HCT116 (cell line): ENCODE measurements at regions of chr9 and their contacts with region 1.

Region 1: GRCh38 chr9:35657546-35658136 is at the start of gene RMRP:
- DNase-seq: peak; percentile 99
- ATAC-seq: peak; percentile 89
- H3K4me3 ChIP-seq: peak within 1 kb of the TSS; percentile 68 to 75
- H3K27ac ChIP-seq: peak within 1 kb of the TSS; percentile 85
- H3K4me1 ChIP-seq: peaks cover 10 to 34% of the 10 kb centered on the region in 2 experiments; a peak in 3 of 4 replicates
- H3K27me3 ChIP-seq: no peaks in the 10 kb centered on the region
- CTCF ChIP-seq: no peak
- POLR2A ChIP-seq: no peak
- RAD21 ChIP-seq: no peak
- total RNA-seq, gene RMRP: 30,969 TPM

Region 2: DNA sequence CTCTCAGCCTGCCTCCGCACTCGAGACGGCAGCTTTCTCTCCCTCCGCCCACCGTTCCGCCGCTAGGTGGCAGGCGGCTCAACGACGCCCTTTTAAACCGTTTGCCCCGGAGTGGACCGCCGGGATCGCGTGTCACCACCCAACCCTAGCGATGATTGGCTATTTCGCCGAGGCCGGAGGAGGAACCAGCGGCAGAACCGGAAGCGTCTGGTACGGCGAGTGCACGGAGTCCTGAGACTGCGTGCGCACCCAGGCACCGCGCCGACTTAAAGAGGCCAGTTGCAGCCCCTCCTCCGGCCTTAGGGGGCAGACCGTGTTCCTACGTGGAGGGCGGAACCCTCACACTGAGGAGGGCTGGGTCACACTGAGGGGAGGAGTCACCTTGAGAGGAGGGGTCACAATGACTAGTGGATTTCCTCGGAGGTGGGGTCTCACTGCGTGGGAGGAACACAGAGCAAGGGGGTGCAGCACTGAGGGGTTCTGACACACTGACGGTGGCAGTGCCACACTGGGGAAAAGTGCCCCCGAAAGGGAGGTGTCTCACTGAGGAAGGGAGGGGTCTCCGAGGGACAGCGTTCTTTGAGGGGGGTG is 53.6 kb before region 1 on chr9:
- CTCF ChIA-PET with region 1: interaction called, 7 read pairs
- POLR2A ChIA-PET with region 1: interaction called, 4 read pairs
- RAD21 ChIA-PET with region 1: no interaction called
- intact Hi-C with region 1: loop called (anchors 2 kb)
- DNase-seq: peak; percentile 99
- ATAC-seq: peak; percentile 89
- H3K4me3 ChIP-seq: peak overlapping the region; percentile 76 to 85
- H3K27ac ChIP-seq: peak overlapping the region; percentile 78
- H3K4me1 ChIP-seq: peaks cover 15 to 31% of the 10 kb centered on the region in 2 experiments; a peak in 3 of 4 replicates
- H3K27me3 ChIP-seq: no peaks in the 10 kb centered on the region
- CTCF ChIP-seq: peak in 2 of 3 experiments; percentile 84 to 87; a peak in 4 of 6 replicates
- POLR2A ChIP-seq: peak; percentile 73
- RAD21 ChIP-seq: no peak

Region 3: DNA sequence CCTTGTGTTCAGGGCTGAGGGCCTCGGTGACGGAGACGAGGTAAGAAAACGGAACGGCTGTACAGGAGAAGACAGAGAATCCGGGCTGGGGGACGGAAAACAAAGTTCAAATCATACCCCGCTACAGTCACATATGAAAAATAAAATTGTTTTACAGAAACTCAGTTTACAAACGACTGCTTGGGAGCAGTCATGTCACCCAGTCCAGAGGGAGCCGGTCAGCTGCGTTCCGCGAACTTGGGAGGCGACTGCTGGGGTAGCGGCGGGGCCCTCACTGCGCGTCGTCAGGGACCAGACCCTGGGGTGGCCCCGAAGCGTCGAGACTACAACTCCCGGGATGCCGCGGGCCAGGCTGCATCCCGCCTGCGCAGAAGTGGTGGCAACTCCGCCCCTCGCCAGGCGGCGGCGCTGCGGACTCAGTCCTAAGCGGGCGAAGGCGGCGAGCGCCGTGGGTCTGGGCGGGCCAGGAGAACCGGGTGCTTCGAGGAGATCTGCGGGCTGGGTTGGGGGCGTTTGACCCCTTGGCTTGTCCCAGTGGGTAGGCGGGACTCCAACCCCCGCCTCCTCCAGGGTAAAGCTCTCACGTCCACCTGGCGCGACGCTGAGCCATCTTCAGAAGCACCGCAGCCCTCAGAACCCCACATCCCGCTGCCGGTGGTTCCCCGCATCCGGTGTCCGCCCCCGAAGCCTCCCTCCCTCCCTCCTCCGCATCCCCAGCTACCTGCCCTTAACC is 10.9 kb before region 1 on chr9:
- CTCF ChIA-PET with region 1: interaction called, 12 read pairs
- POLR2A ChIA-PET with region 1: interaction called, 6 read pairs
- RAD21 ChIA-PET with region 1: no interaction called
- intact Hi-C with region 1: no loop called
- DNase-seq: peak; percentile 70
- ATAC-seq: peak; percentile 97
- H3K4me3 ChIP-seq: peak overlapping the region; percentile 56 to 62
- H3K27ac ChIP-seq: peak overlapping the region; percentile 56
- H3K4me1 ChIP-seq: peaks cover 6 to 20% of the 10 kb centered on the region in 2 experiments; a peak in 3 of 4 replicates
- H3K27me3 ChIP-seq: no peaks in the 10 kb centered on the region
- CTCF ChIP-seq: peak; percentile 69 to 86 (median 81)
- POLR2A ChIP-seq: no peak
- RAD21 ChIP-seq: peak; percentile 93

Region 4: GRCh38 chr9:35690431-35691333 is 33.0 kb after region 1 on chr9:
- CTCF ChIA-PET with region 1: interaction called, 33 read pairs
- POLR2A ChIA-PET with region 1: interaction called, 5 read pairs
- RAD21 ChIA-PET with region 1: interaction called in 1 of 2 experiments, 3 read pairs
- intact Hi-C with region 1: loop called (anchors 2 kb)
- DNase-seq: no peak
- ATAC-seq: peak; percentile 64
- H3K4me3 ChIP-seq: peak overlapping the region; percentile 83 to 90
- H3K27ac ChIP-seq: peak overlapping the region; percentile 97
- H3K4me1 ChIP-seq: peaks cover 18 to 30% of the 10 kb centered on the region in 2 experiments
- H3K27me3 ChIP-seq: no peaks in the 10 kb centered on the region
- CTCF ChIP-seq: no peak
- POLR2A ChIP-seq: no peak
- RAD21 ChIP-seq: no peak

Region 5: DNA sequence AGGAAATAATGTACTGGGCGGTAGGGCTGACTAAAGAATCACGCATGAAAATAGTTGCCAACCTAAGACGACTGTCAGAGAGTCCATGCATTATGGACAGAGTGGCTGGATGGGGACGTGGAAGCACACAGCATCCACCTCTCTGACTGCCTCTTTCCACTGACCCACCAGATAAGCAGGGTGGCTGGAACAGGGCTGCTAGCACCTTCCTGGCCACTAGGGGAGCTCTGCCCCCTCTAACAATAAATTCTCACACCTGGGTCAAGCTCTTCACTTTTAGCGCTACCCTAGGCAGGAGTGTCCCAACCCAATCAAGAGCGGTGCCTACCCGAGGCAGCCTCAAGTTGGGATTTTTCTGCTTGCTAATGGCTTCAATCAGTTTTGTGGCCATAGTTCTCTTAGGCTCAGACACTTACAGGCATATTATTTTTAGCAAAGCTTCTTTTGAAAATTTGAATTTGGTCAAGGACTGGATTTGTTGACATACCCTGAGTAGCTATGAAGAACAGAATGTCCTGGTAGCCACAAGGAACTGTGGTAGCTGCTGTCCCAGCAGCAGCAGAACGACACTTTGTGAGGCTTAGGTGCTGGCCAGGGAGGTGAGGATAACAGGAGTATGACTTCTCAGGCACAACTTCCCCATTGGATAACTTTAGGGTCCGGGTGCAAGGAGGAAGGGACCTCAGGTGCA is 39.0 kb after region 1 on chr9:
- CTCF ChIA-PET with region 1: interaction called, 33 read pairs
- POLR2A ChIA-PET with region 1: interaction called, 4 read pairs
- RAD21 ChIA-PET with region 1: interaction called in 1 of 2 experiments, 3 read pairs
- intact Hi-C with region 1: loop called (anchors 2 kb)
- DNase-seq: peak; percentile 37
- ATAC-seq: peak; percentile 94
- H3K4me3 ChIP-seq: no peak overlapping the region
- H3K27ac ChIP-seq: peak overlapping the region; percentile 2; the same call in 1 of the 2 replicates
- H3K4me1 ChIP-seq: peaks cover under 1 to 4% of the 10 kb centered on the region in 2 experiments; a peak in 2 of 4 replicates
- H3K27me3 ChIP-seq: no peaks in the 10 kb centered on the region
- CTCF ChIP-seq: peak in 2 of 3 experiments; percentile 96 to 97; a peak in 4 of 6 replicates
- POLR2A ChIP-seq: no peak
- RAD21 ChIP-seq: no peak